Activated CD8-positive, alpha-beta T cell treated with anti-CD3 and anti-CD28 coated beads for 36 hours (primary cell): ENCODE measurements at regions of chr15 and their contacts with region 1.

Region 1: GRCh38 chr15:44426975-44427755 is at the start of gene CTDSPL2:
- DNase-seq: peak; percentile 96
- ATAC-seq: peak; percentile 98
- H3K4me3 Mint-ChIP-seq: peak within 1 kb of the TSS; percentile 94
- H3K27ac Mint-ChIP-seq: peak within 1 kb of the TSS; percentile 98
- H3K4me1 Mint-ChIP-seq: peaks cover 33% of the 10 kb centered on the region
- H3K27me3 Mint-ChIP-seq: no peaks in the 10 kb centered on the region
- CTCF ChIP-seq: no peak
- total RNA-seq, gene CTDSPL2: 74.3 to 75.1 TPM

Region 2: DNA sequence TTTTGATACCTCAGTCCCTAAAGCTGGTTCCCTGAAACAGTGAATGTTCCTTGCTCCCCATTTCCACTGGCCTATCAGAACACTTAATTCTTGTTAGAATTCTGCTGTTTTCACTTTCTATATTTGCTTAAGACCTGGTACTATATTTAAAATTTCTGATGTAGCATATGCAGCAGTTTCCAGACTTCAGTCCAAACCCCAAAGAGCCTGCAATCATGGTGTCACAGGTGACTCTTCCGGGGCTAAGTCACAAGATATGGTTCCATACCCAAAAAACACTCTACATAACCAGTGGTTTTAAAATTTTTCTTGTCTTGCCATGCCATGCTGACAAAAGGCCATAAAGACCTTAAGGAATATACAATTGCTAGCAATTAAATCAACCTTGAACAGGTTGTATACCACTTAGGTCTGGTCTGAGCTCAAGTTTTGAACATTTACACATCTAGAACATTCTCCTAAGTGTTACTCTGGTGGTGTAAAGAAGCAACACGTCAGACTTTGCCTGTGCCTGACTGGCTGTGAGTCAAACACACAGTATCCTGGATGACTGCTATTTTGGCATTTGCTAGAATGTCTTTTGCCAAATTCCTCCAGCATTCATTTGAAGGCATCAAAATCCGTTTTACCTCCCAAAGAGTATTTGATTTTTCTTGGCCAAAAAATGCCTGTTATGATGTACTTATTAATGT is 392.1 kb before region 1 on chr15:
- CTCF ChIA-PET with region 1: no interaction called
- POLR2A ChIA-PET with region 1: no interaction called
- intact Hi-C with region 1: no loop called
- DNase-seq: no peak
- ATAC-seq: no peak
- H3K4me3 Mint-ChIP-seq: no peak overlapping the region
- H3K27ac Mint-ChIP-seq: no peak overlapping the region
- H3K4me1 Mint-ChIP-seq: peaks cover 5% of the 10 kb centered on the region
- H3K27me3 Mint-ChIP-seq: peaks cover 34% of the 10 kb centered on the region
- CTCF ChIP-seq: no peak

Region 3: GRCh38 chr15:44308415-44308814 is 118.8 kb before region 1 on chr15:
- CTCF ChIA-PET with region 1: no interaction called
- POLR2A ChIA-PET with region 1: interaction called, 4 read pairs
- intact Hi-C with region 1: loop called (anchors 10 kb)
- DNase-seq: peak; percentile 49
- ATAC-seq: peak; percentile 89
- H3K4me3 Mint-ChIP-seq: peak overlapping the region; percentile 32
- H3K27ac Mint-ChIP-seq: peak overlapping the region; percentile 96
- H3K4me1 Mint-ChIP-seq: peaks cover 40% of the 10 kb centered on the region
- H3K27me3 Mint-ChIP-seq: no peaks in the 10 kb centered on the region
- CTCF ChIP-seq: no peak

Region 4: GRCh38 chr15:44340410-44340809 is 86.8 kb before region 1 on chr15:
- CTCF ChIA-PET with region 1: no interaction called
- POLR2A ChIA-PET with region 1: no interaction called
- intact Hi-C with region 1: no loop called
- DNase-seq: no peak
- ATAC-seq: no peak
- H3K4me3 Mint-ChIP-seq: no peak overlapping the region
- H3K27ac Mint-ChIP-seq: no peak overlapping the region
- H3K4me1 Mint-ChIP-seq: no peaks in the 10 kb centered on the region
- H3K27me3 Mint-ChIP-seq: no peaks in the 10 kb centered on the region
- CTCF ChIP-seq: no peak

Region 5: GRCh38 chr15:44438402-44438801 is 11.2 kb after region 1 on chr15:
- CTCF ChIA-PET with region 1: interaction called, 3 read pairs
- POLR2A ChIA-PET with region 1: interaction called, 11 read pairs
- intact Hi-C with region 1: no loop called
- DNase-seq: no peak
- ATAC-seq: no peak
- H3K4me3 Mint-ChIP-seq: no peak overlapping the region
- H3K27ac Mint-ChIP-seq: no peak overlapping the region
- H3K4me1 Mint-ChIP-seq: peaks cover 60% of the 10 kb centered on the region
- H3K27me3 Mint-ChIP-seq: no peaks in the 10 kb centered on the region
- CTCF ChIP-seq: no peak

Region 6: DNA sequence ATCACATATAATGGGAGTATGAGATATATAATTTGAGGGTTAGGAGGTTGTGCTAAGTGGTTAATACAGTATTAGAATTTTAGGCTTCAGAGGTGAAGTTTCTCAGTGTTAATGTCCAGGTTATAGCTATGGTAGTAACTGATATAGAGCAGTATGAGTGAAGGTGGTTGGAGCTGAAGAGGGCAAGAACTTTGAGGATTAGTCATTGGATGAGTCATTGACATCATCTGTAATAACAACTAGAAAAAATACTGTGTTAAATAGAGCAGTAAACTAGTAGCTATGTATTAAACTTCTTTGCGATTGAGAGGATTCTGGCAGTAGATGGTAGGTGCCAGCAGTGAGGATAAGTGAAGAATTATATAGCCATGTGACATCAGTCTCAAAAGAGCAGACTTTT is 62.3 kb after region 1 on chr15:
- CTCF ChIA-PET with region 1: interaction called, 3 read pairs
- POLR2A ChIA-PET with region 1: no interaction called
- intact Hi-C with region 1: loop called (anchors 10 kb)
- DNase-seq: no peak
- ATAC-seq: peak; percentile 92
- H3K4me3 Mint-ChIP-seq: no peak overlapping the region
- H3K27ac Mint-ChIP-seq: peak overlapping the region; percentile 47
- H3K4me1 Mint-ChIP-seq: peaks cover 35% of the 10 kb centered on the region
- H3K27me3 Mint-ChIP-seq: no peaks in the 10 kb centered on the region
- CTCF ChIP-seq: no peak

Region 7: GRCh38 chr15:44501768-44502366 is 74.7 kb after region 1 on chr15:
- CTCF ChIA-PET with region 1: interaction called, 16 read pairs
- POLR2A ChIA-PET with region 1: interaction called, 4 read pairs
- intact Hi-C with region 1: no loop called
- DNase-seq: no peak
- ATAC-seq: peak; percentile 62
- H3K4me3 Mint-ChIP-seq: no peak overlapping the region
- H3K27ac Mint-ChIP-seq: peak overlapping the region; percentile 13
- H3K4me1 Mint-ChIP-seq: peaks cover 22% of the 10 kb centered on the region
- H3K27me3 Mint-ChIP-seq: no peaks in the 10 kb centered on the region
- CTCF ChIP-seq: peak; percentile 71

Region 8: GRCh38 chr15:44536962-44537734 is 110.0 kb after region 1 on chr15 and contains the start of gene EIF3J:
- CTCF ChIA-PET with region 1: interaction called, 4 read pairs
- POLR2A ChIA-PET with region 1: interaction called, 14 read pairs
- intact Hi-C with region 1: loop called (anchors 5 kb)
- DNase-seq: peak; percentile 95
- ATAC-seq: peak; percentile 93
- H3K4me3 Mint-ChIP-seq: peak within 1 kb of the TSS; percentile 87
- H3K27ac Mint-ChIP-seq: peak within 1 kb of the TSS; percentile 96
- H3K4me1 Mint-ChIP-seq: peaks cover 45% of the 10 kb centered on the region
- H3K27me3 Mint-ChIP-seq: no peaks in the 10 kb centered on the region
- CTCF ChIP-seq: no peak
- total RNA-seq, gene EIF3J: 109 to 112 TPM

Region 9: GRCh38 chr15:44593042-44593736 is 166.0 kb after region 1 on chr15:
- CTCF ChIA-PET with region 1: no interaction called
- POLR2A ChIA-PET with region 1: no interaction called
- intact Hi-C with region 1: no loop called
- DNase-seq: peak; percentile 21
- ATAC-seq: peak; percentile 73
- H3K4me3 Mint-ChIP-seq: no peak overlapping the region
- H3K27ac Mint-ChIP-seq: peak overlapping the region; percentile 32
- H3K4me1 Mint-ChIP-seq: peaks cover 27% of the 10 kb centered on the region
- H3K27me3 Mint-ChIP-seq: no peaks in the 10 kb centered on the region
- CTCF ChIP-seq: peak; percentile 68